Heart left ventricle (tissue), 16 donors: ENCODE measurements at regions of chr17 and their contacts with region 1.

Region 1: DNA sequence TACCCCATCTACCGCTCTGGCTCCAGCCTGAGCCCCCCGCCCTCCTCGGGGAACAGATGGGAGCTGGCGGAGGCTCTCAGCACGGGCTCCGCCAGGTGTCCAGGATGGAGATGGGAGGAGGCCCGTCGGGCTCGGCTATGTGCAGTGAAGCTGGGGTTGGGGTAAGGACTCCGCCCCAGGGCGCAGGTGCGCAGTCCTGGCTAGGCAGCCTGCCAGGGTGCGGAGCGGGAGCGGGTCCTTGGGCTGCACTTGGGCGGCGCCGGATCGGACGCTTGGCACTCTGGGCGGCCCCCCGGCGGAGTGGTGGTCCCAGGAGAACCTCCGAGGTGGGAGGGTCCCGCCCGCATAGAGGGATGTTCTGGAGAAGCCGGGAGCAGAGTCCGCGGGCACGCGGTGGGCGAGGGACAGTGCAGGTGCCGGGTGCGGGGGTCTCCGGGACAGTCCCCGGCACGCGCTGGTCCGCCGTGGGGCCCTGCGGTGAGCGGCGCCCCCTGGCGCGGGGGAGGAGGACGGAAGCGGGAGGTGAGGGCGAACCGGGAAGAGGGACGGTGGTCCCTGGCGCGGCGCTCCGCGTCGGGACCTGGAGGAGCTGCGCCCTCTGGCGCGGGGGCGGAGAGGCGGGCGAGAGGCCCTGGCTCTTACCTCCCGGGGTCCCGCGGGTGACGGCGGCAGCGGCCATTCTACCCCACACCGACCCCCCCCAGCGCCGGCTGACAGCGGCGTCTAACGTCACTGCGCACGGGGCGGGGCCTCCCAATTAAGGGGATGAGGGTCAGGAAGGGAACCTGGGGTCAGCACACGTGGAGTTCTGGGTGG is at the start of gene CAMTA2:
- DNase-seq: peak; percentile 93 to 95 (median 94)
- ATAC-seq: peak; percentile 91 to 97 (median 97)
- H3K4me3 ChIP-seq: peak within 1 kb of the TSS; percentile 49 to 95 (median 76)
- H3K27ac ChIP-seq: peak within 1 kb of the TSS; percentile 77 to 97 (median 93)
- H3K4me1 ChIP-seq: peaks cover 0 to 32% (median 23%) of the 10 kb centered on the region in 12 donors
- H3K27me3 ChIP-seq: no peaks in the 10 kb centered on the region
- CTCF ChIP-seq: peak; percentile 63 to 94 (median 80)
- POLR2A ChIP-seq: peak in 1 of 2 donors; percentile 90
- total RNA-seq, gene CAMTA2: 25.2 to 108 (median 32.4) TPM

Region 2: DNA sequence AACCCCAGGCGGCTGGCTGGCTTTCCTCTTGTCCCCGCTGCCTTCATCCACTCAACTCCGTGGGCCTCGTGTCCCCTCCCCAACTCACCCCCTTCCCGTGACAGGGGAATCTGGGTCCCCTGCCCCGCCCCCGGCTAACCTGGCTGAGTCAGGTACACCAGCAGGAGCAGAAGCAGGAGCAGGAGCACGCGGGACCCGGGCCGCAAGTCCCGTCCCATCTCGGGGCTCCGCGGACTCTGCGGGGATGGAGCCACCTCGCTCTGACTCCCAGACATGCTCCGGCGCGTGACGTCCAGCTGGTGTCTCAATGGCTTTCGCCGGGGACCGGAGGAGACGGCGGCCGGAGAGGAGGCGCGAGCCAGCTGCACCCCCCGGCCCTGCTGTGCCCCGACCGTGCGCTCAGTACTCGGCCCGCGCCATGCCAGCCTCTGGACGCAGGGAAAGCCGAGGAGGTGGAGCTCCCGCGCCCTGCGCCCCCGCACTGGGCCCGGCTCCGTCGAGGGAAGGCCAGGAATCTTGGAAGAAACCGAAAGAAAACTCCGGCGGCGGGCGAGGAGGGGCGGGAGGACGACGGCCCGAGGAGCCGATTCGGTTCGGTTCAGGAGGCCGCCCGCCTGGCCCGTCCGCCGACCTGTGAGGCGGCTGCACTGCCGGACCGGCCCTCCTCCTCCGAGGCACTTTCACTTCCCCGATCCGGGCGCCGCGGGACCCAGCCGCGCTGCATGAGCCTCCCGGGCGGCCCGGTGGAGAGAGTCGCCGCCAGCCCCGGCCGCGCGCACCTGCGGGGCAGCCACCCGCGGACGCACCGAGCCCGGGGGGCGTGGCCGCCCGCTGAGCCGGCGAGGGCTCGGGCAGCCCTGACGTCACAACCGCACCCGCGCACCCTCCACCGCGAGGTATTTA is 247.8 kb before region 1 on chr17 and contains the starts of genes CXCL16 and ZMYND15:
- intact Hi-C with region 1: loop called in 1 of 10 experiments (anchors 5 kb)
- DNase-seq: peak; percentile 47 to 83 (median 57)
- ATAC-seq: peak in 3 of 4 donors; percentile 63 to 72 (median 63)
- H3K4me3 ChIP-seq: peak within 1 kb of the TSS; percentile 62 to 94 (median 84)
- H3K27ac ChIP-seq: peak within 1 kb of the TSS in 8 of 12 donors; percentile 14 to 77 (median 57)
- H3K4me1 ChIP-seq: peaks cover 0 to 39% (median 10%) of the 10 kb centered on the region in 12 donors
- H3K27me3 ChIP-seq: peaks cover 0 to 30% (median 4%) of the 10 kb centered on the region in 9 donors
- CTCF ChIP-seq: no peak
- POLR2A ChIP-seq: no peak
- total RNA-seq, gene CXCL16: 1.6 to 42.5 (median 4.5) TPM
- total RNA-seq, gene ZMYND15: 0.27 to 2.9 (median 0.44) TPM in 6 of 9 donors, not detected in the others

Region 3: GRCh38 chr17:4913994-4914393 is 73.2 kb before region 1 on chr17:
- intact Hi-C with region 1: loop called in 9 of 10 experiments (anchors 1 to 5 kb)
- DNase-seq: no peak
- ATAC-seq: no peak
- H3K4me3 ChIP-seq: no peak overlapping the region
- H3K27ac ChIP-seq: no peak overlapping the region
- H3K4me1 ChIP-seq: peaks cover 0 to 8% (median 5%) of the 10 kb centered on the region in 12 donors
- H3K27me3 ChIP-seq: no peaks in the 10 kb centered on the region
- CTCF ChIP-seq: no peak
- POLR2A ChIP-seq: no peak

Region 4: DNA sequence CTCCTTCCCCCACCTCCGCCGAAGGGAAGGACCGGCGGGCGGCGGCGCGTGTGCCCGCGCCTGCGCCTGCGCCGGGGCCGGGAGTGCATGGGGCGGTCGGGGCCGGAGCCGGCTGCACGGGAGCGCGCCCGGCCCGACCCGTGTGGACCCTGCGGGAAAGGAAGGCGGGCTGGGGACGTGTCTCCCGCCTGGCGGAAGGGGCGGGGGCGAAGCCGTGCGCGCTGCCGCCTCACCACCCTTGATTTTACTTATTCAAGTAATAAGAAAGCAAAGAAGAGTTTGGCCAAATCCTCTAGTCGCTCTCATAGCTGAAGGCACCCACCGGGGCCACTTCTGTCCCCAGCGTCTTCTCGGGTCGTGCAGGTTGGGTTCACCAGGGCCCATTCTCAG is 38.2 kb before region 1 on chr17:
- intact Hi-C with region 1: loop called in 1 of 10 experiments (anchors 5 kb)
- DNase-seq: peak; percentile 88 to 92 (median 90)
- ATAC-seq: peak; percentile 64 to 82 (median 78)
- H3K4me3 ChIP-seq: peak overlapping the region; percentile 73 to 100 (median 98)
- H3K27ac ChIP-seq: peak overlapping the region; percentile 96 to 100 (median 99)
- H3K4me1 ChIP-seq: peaks cover 11 to 79% (median 44%) of the 10 kb centered on the region in 12 donors
- H3K27me3 ChIP-seq: no peaks in the 10 kb centered on the region
- CTCF ChIP-seq: no peak
- POLR2A ChIP-seq: peak in 1 of 2 donors; percentile 62

Region 5: DNA sequence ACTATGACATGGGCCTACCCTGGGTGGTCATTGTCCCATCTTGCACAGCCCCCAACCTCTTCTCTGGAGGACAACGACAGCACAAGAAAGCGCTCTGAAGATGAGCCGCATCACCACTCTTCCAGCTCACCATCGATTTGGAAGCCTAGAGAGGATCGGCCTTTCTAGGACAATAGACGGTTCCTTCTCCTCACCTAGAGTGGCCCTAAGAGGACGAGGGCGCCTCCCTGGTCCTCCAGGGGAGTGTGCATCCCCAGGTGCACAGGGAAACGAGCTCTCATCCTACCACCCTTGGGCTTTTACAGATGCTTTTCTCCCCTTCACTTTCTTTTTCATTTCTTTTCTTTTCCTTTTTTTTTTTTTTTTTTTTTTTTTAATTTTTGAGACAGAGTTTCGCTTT is 68.4 kb after region 1 on chr17:
- intact Hi-C with region 1: loop called in 7 of 10 experiments (anchors 5 kb)
- DNase-seq: no peak
- ATAC-seq: no peak
- H3K4me3 ChIP-seq: no peak overlapping the region
- H3K27ac ChIP-seq: no peak overlapping the region
- H3K4me1 ChIP-seq: no peaks in the 10 kb centered on the region
- H3K27me3 ChIP-seq: peaks cover 0 to 3% (median 0%) of the 10 kb centered on the region in 9 donors
- CTCF ChIP-seq: no peak
- POLR2A ChIP-seq: no peak

Region 6: GRCh38 chr17:5131146-5131715 is 144.1 kb after region 1 on chr17:
- intact Hi-C with region 1: no loop called
- DNase-seq: no peak
- ATAC-seq: no peak
- H3K4me3 ChIP-seq: no peak overlapping the region
- H3K27ac ChIP-seq: no peak overlapping the region
- H3K4me1 ChIP-seq: no peaks in the 10 kb centered on the region
- H3K27me3 ChIP-seq: peaks cover 0 to 3% (median 0%) of the 10 kb centered on the region in 9 donors
- CTCF ChIP-seq: no peak
- POLR2A ChIP-seq: no peak